ENCODE measurements at regions of chr10 and their contacts with region 1.

Region 1: DNA sequence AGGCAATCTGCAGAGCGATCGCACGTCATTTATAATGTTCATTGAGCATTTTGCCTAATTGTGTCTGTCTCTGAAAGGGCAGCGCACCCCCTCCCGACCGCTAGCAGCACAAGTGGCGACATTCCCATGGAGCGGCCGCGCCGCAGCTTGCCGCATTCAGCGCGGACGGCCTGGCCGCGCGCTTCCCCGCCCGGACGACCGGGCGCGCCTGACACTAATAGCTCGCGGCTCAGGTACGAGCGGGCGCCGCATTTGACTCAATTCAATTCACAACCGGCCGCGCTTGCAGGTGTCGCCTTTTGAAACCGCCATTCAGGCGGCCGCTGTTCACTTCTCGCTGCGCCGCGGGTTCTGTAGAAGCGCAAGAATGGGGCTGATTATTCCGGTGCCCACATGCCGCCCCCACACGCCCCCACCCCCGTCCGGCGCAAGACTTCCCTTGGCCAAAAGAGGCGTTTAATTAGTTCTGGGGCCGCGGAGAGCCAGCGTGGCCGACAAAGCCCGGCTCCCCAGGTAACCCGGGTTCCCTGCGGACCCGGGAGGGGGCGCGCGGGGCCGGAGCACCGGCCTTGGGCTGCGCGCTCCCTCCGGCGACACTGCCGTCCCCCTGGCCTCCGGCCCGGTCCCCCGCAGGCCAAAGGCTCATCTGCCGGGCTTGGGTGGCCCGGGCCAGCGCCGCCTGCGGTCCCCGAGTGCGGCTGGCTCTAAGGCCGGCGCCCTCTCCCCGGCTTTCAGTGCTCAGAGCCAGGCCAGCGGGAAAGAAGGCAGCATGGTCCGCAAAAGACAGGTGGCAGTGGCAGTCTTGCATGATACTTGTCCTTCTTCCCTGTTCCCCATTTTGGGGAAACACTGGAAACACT is 18.7 kb upstream of the PTF1A start:
- DNase-seq: no peak
- ATAC-seq: no peak
- H3K4me3 ChIP-seq: no peak overlapping the region
- H3K27ac ChIP-seq: no peak overlapping the region
- H3K4me1 ChIP-seq: no peaks in the 10 kb centered on the region
- H3K27me3 ChIP-seq: peaks cover 0 to 1% of the 10 kb centered on the region in 2 donors

Region 2: DNA sequence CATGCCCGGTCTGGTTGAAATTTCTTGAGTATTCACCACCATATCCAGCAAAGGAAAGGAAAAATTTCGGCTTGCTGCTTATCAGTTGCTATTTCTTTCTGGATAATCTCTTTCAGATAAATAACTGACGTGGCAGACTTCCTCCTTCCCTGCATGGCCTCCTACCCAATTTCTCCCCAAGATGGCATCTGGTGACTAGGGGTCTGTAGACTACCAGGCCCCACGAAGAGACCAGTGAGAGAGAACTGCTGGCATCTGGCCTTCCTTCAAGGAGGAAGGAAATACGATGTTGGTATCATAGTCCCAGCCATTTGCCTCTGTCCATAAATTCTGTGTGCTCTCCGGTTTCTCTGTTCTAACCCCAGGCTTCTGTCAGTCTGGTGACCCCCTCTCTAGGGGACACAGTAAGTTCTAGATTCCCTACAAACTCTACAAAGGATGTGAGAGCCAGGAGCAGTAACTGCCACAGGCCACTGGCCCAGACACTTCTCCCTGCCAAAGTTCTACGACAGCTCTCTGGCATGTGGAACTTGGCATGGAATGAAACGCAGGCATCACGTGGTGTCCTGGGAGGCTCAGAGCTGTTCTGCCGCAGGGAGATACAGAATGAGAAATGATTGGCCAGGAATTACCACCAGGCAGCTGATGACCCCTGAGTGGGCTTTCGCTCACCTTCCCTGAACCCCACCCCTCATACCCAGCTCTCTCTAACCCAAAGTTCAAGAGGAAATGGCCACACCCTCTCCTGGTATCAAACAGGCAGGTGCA is 108.1 kb before region 1 on chr10:
- intact Hi-C with region 1: no loop called
- DNase-seq: peak; percentile 86 to 90
- ATAC-seq: peak; percentile 90
- H3K4me3 ChIP-seq: no peak overlapping the region
- H3K27ac ChIP-seq: peak overlapping the region; percentile 28 to 92
- H3K4me1 ChIP-seq: peaks cover 0 to 4% of the 10 kb centered on the region in 2 donors
- H3K27me3 ChIP-seq: no peaks in the 10 kb centered on the region

Region 3: GRCh38 chr10:23217471-23217870 is 44.0 kb after region 1 on chr10:
- intact Hi-C with region 1: loop called in 1 of 2 experiments (anchors 2 kb)
- DNase-seq: no peak
- ATAC-seq: no peak
- H3K4me3 ChIP-seq: no peak overlapping the region
- H3K27ac ChIP-seq: no peak overlapping the region
- H3K4me1 ChIP-seq: no peaks in the 10 kb centered on the region
- H3K27me3 ChIP-seq: no peaks in the 10 kb centered on the region

Region 4: GRCh38 chr10:23664024-23664423 is 490.6 kb after region 1 on chr10:
- intact Hi-C with region 1: no loop called
- DNase-seq: no peak
- ATAC-seq: no peak
- H3K4me3 ChIP-seq: no peak overlapping the region
- H3K27ac ChIP-seq: no peak overlapping the region
- H3K4me1 ChIP-seq: no peaks in the 10 kb centered on the region
- H3K27me3 ChIP-seq: no peaks in the 10 kb centered on the region

Measured in aorta (tissue), 5 donors.